GM13977 (cell line): ENCODE measurements at regions of chr7 and their contacts with region 1.

Region 1: DNA sequence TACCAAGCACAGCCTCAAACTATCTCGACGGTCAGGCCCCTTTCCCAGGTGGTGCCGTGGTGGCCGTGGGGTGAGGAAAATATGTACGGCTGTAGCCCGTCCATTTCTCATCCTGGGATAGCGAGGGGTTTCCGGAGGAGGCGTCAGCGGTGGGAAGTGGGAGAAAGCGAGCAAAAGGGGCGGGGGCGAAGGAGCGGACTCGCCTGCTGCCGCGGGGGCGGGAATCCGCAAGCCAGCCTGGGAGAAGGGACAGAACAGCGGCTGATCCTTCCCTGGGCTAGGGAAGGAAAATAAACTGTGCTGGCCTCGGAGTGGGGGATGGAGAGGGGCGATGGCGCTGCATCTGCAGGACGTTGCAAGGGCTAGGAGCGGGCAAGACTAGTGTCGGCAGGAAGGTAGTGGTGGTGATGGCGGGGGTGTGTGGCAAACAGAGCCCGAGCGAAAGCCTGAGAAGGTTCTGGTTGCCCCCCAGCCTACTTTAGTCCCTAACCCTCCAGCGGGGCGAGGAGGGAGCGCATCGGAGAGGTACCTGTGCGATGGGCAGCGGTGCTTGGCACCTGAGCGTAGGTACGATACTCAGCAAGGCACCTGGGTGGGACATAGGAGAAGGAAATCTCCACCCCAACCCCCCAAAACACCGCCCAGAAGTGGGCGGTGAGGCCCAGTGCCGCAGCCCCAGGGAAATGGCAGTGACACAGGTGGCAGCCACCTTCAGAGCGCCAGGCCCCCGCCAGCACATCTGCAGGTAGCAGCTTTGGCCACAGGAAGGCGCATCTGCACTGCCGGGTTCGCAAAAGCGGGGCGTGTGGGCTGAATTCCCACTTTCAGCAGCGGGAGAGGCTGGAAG is 49.9 kb upstream of the STEAP1B start:
- DNase-seq: peak; percentile 55
- CTCF ChIP-seq: peak; percentile 83

Region 2: GRCh38 chr7:22726345-22727185 is 176.7 kb after region 1 on chr7:
- in situ Hi-C with region 1: loop called (anchors 5 kb)
- DNase-seq: peak; percentile 80
- CTCF ChIP-seq: peak; percentile 90

Region 3: GRCh38 chr7:22949944-22950343 is 400.1 kb after region 1 on chr7:
- in situ Hi-C with region 1: no loop called
- DNase-seq: no peak
- CTCF ChIP-seq: no peak